ENCODE measurements at regions of chr15 and their contacts with region 1.

Region 1: GRCh38 chr15:71448688-71449114 is 333.4 kb downstream of the THSD4 start:
- DNase-seq: peak in 1 of 2 donors; percentile 74
- H3K4me3 ChIP-seq: no peak overlapping the region
- CTCF ChIP-seq: peak in 1 of 3 donors; percentile 77
- POLR2A ChIP-seq: no peak

Region 2: GRCh38 chr15:71011503-71012155 is 437.1 kb before region 1 on chr15:
- intact Hi-C with region 1: loop called (anchors 10 kb)
- DNase-seq: peak in 1 of 2 donors; percentile 21
- H3K4me3 ChIP-seq: no peak overlapping the region
- CTCF ChIP-seq: no peak
- POLR2A ChIP-seq: no peak

Region 3: GRCh38 chr15:71397377-71397776 is 51.3 kb before region 1 on chr15:
- intact Hi-C with region 1: no loop called
- DNase-seq: no peak
- H3K4me3 ChIP-seq: no peak overlapping the region
- CTCF ChIP-seq: no peak
- POLR2A ChIP-seq: no peak

Region 4: DNA sequence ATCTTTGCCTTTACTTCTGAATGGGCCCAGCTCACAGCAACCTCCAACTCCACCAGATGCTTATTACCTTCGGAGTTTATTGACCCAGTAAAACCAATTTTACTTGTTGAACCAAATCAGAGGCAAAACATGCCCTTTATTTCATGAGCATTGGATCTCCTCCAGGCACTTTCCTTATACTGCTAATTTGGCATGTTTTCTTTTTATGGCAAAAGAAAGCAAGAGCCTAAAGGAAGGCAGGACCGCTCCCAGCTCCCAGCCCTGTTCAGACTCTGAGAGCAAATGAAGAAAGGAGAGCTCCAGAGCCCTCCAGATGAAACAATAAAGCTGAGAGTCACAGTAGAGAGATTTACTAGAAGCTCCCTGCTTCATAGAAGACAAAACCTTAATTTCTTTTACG is 280.2 kb after region 1 on chr15:
- intact Hi-C with region 1: loop called (anchors 5 kb)
- DNase-seq: no peak
- H3K4me3 ChIP-seq: no peak overlapping the region
- CTCF ChIP-seq: no peak
- POLR2A ChIP-seq: no peak

Measured in lower leg skin (tissue), 4 donors.